ENCODE measurements at regions of chr3 and their contacts with region 1.

Region 1: DNA sequence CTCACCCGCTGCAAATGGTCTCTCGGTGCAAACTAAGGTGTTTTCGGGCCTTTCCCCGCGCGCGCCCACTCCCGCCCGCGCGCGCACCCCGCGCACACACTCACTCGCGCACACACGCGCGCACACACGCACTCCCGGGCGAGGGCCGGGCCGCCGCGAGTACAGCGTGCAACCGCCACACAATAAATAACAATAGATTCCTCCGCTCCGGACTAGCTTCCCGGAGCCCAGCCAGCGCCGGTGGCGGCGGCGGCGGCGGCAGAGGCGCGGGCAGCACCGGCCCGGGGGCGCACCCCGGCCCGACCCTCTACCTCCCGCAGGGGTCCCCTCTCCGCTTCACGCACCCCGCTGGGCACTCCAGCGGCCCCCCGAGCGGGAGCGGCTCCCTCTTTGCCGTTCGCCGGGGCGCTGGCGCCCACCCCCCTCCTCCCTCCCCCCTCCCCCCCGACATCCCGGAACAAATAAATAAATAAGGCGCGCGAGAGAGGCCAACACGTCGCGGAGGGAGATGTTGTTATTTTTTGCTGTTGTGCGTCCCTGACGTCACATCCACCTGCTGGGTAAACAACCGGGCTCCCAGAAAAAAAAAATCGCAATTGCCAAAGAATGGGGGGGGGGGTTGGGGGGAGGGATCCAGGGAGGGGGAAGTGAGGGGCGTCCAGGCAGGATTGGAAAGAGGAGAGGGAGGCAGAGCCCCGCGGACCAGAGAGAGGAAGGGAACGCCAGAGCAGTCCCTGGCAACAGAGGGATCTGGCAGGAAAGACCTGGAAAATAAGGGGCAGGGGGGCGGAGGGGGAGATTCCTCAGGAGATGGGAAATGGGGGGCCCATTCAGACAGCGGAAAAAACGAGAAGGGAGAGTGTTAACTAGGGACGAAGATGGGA is at the start of gene FOXP1:
- DNase-seq: peak; percentile 83
- H3K4me3 ChIP-seq: peak within 1 kb of the TSS; percentile 73
- H3K27ac ChIP-seq: peak within 1 kb of the TSS; percentile 85
- H3K4me1 ChIP-seq: peaks cover 41% of the 10 kb centered on the region
- H3K27me3 ChIP-seq: no peaks in the 10 kb centered on the region
- CTCF ChIP-seq: no peak
- total RNA-seq, gene FOXP1: 52.2 and 58.4 TPM in 2 replicates

Region 2: GRCh38 chr3:70550723-70551319 is 1033.0 kb before region 1 on chr3:
- CTCF ChIA-PET with region 1: no interaction called
- POLR2A ChIA-PET with region 1: no interaction called
- intact Hi-C with region 1: loop called (anchors 10 kb)
- DNase-seq: peak; percentile 58
- H3K4me3 ChIP-seq: no peak overlapping the region
- H3K27ac ChIP-seq: no peak overlapping the region
- H3K4me1 ChIP-seq: no peaks in the 10 kb centered on the region
- H3K27me3 ChIP-seq: no peaks in the 10 kb centered on the region
- CTCF ChIP-seq: peak; percentile 63

Region 3: GRCh38 chr3:71006810-71007785 is 576.7 kb before region 1 on chr3:
- CTCF ChIA-PET with region 1: no interaction called
- POLR2A ChIA-PET with region 1: no interaction called
- intact Hi-C with region 1: loop called (anchors 10 kb)
- DNase-seq: peak; percentile 41
- H3K4me3 ChIP-seq: no peak overlapping the region
- H3K27ac ChIP-seq: no peak overlapping the region
- H3K4me1 ChIP-seq: peaks cover 31% of the 10 kb centered on the region
- H3K27me3 ChIP-seq: no peaks in the 10 kb centered on the region
- CTCF ChIP-seq: peak; percentile 46; the same call in 1 of the 2 replicates

Region 4: DNA sequence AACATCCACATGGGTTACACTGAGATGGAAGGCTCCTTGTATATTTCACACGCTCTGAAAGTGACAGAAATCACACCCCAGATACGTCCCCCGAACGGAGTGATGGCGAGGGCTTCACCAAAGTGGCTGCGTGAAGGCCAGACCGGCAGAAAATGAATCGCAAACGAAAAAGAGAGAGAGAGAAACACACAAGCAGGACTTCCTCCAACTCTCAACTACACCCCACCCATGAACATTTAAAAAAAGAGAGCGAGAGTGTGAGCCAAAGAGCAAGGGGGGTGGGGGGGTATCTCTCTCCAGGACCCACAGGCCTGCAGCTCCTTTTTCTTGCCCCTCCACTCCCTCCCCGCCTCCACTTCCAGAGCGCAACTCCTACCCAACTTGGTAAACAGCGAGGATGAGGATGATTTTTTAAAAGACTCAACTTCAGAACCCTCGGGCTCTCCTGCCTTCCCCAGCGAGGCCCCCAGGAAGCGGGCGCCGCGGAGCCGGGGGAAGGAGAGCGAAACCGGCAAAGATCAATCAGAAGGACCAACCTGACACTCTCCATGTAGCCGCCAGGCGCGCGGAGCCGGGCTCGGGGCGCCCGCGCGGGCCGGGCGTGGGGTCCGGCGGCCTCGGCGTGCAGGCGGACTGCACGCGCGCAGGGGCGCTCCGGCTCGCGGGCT is 519.4 kb before region 1 on chr3:
- CTCF ChIA-PET with region 1: no interaction called
- POLR2A ChIA-PET with region 1: no interaction called
- intact Hi-C with region 1: loop called (anchors 10 kb)
- DNase-seq: peak; percentile 51
- H3K4me3 ChIP-seq: peak overlapping the region; percentile 59
- H3K27ac ChIP-seq: peak overlapping the region; percentile 68
- H3K4me1 ChIP-seq: peaks cover 57% of the 10 kb centered on the region
- H3K27me3 ChIP-seq: no peaks in the 10 kb centered on the region
- CTCF ChIP-seq: no peak

Region 5: GRCh38 chr3:71201939-71202338 is 381.9 kb before region 1 on chr3:
- CTCF ChIA-PET with region 1: interaction called, 4 read pairs
- POLR2A ChIA-PET with region 1: no interaction called
- intact Hi-C with region 1: loop called (anchors 5 kb)
- DNase-seq: peak; percentile 83
- H3K4me3 ChIP-seq: no peak overlapping the region
- H3K27ac ChIP-seq: peak overlapping the region; percentile 98
- H3K4me1 ChIP-seq: peaks cover 63% of the 10 kb centered on the region
- H3K27me3 ChIP-seq: no peaks in the 10 kb centered on the region
- CTCF ChIP-seq: no peak

Region 6: GRCh38 chr3:71305231-71306206 is 278.3 kb before region 1 on chr3:
- CTCF ChIA-PET with region 1: no interaction called
- POLR2A ChIA-PET with region 1: no interaction called
- intact Hi-C with region 1: loop called (anchors 5 kb)
- DNase-seq: peak; percentile 37
- H3K4me3 ChIP-seq: peak overlapping the region; percentile 41
- H3K27ac ChIP-seq: peak overlapping the region; percentile 88
- H3K4me1 ChIP-seq: peaks cover 42% of the 10 kb centered on the region
- H3K27me3 ChIP-seq: no peaks in the 10 kb centered on the region
- CTCF ChIP-seq: no peak

Region 7: GRCh38 chr3:71369701-71370391 is 214.0 kb before region 1 on chr3:
- CTCF ChIA-PET with region 1: no interaction called
- POLR2A ChIA-PET with region 1: no interaction called
- intact Hi-C with region 1: no loop called
- DNase-seq: no peak
- H3K4me3 ChIP-seq: no peak overlapping the region
- H3K27ac ChIP-seq: no peak overlapping the region
- H3K4me1 ChIP-seq: no peaks in the 10 kb centered on the region
- H3K27me3 ChIP-seq: no peaks in the 10 kb centered on the region
- CTCF ChIP-seq: no peak

Region 8: DNA sequence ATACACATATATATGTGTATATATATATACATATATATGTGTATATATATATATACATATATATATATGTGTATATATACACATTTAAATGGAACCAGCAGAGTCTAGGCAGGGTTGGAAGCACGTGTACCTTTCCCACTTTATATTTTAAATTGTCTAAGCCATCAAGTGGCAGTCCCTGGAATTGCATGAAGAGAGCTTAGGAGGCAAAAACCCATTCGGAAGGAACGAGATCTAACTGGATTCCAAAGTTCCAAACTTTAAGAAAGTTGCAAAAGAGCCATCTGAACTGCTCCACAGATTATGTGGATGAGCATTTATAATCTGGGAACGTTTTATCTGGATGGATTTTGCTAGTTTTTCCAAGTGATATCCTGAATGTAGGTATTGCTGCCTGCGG is 186.8 kb before region 1 on chr3:
- CTCF ChIA-PET with region 1: no interaction called
- POLR2A ChIA-PET with region 1: no interaction called
- intact Hi-C with region 1: loop called (anchors 5 kb)
- DNase-seq: peak; percentile 56
- H3K4me3 ChIP-seq: no peak overlapping the region
- H3K27ac ChIP-seq: no peak overlapping the region
- H3K4me1 ChIP-seq: peaks cover 23% of the 10 kb centered on the region
- H3K27me3 ChIP-seq: no peaks in the 10 kb centered on the region
- CTCF ChIP-seq: peak; percentile 46

Measured in A673 (cell line).